ENCODE measurements at regions of chr20 and their contacts with region 1.

Region 1: DNA sequence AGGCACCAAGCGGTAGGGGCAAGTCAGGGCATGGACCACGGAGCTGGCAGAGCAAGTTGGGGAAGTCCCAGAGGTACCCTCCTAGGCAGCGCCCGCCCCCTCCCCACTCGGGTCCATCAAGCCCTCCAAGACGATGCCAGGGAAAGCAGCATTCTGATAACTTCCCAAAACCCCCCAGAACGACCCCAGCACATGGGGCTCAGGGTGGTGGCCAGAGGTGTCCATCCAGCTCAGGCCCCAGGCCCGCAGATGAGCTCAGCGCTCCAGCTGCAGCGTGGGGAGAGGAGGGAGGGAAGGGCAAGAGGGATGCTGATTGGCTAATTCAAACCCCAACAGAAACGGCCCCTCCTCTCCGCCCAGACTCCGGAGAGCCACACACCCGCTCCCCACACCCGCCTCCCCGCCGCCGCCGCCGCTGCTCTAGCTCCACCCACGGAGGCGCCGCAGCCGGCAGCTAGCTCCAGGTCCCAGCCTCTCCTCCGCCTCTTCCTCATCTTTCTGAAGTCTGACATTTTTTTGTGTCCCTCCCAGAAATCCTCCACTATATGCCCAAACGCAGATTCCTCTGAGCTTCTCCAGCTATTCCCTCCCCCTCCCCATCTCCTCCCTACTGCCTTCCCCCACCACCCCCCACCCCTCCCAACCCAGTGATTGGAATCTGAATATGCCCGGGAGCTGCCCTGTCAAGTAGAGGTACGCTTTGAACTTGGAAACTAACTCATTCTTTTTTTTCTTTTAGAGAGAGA is 40.3 kb upstream of the TLDC2 start:
- DNase-seq: peak; percentile 92
- H3K4me3 Mint-ChIP-seq: peak overlapping the region; percentile 77
- H3K27ac Mint-ChIP-seq: peak overlapping the region; percentile 96
- H3K4me1 Mint-ChIP-seq: peaks cover 35% of the 10 kb centered on the region
- H3K27me3 Mint-ChIP-seq: no peaks in the 10 kb centered on the region

Region 2: GRCh38 chr20:36819659-36820058 is 16.0 kb before region 1 on chr20:
- CTCF ChIA-PET with region 1: interaction called, 14 read pairs
- POLR2A ChIA-PET with region 1: no interaction called
- DNase-seq: no peak
- H3K4me3 Mint-ChIP-seq: no peak overlapping the region
- H3K27ac Mint-ChIP-seq: no peak overlapping the region
- H3K4me1 Mint-ChIP-seq: no peaks in the 10 kb centered on the region
- H3K27me3 Mint-ChIP-seq: peaks cover 3% of the 10 kb centered on the region

Region 3: DNA sequence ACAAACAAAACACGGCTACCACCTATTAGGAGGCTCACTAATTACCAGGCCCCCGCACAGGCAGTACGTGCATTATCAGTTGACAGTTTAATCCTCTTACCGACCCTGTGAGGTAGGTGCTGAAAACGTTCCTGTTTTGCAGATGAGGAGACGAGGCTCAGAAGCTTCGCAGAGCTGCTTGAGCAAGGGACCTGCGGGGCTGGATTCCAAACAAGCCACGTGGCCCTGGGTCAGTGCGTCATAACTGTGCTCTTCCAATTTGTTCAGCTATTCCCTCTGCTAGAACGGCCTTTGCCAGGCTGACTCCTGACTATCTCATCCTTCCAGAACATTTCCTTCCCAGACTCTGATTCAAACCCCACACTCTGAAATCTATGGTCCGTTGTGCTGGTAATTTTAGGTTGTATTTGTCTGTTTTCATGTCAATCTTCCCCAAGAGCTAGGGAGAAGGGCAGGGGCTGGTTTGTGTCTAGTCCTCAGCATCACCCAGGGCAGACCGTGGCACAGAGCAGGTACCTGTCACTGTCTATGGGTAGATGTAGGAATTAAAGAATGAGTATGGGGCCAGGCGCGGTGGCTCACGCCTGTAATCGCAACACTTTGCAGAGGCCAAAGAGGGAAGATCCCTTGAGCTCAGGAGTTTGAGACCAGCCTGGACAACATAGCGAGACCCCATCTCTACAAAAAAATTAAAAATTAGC is 11.5 kb after region 1 on chr20:
- CTCF ChIA-PET with region 1: interaction called, 29 read pairs
- POLR2A ChIA-PET with region 1: no interaction called
- DNase-seq: no peak
- H3K4me3 Mint-ChIP-seq: no peak overlapping the region
- H3K27ac Mint-ChIP-seq: no peak overlapping the region
- H3K4me1 Mint-ChIP-seq: peaks cover 15% of the 10 kb centered on the region
- H3K27me3 Mint-ChIP-seq: peaks cover 4% of the 10 kb centered on the region

Region 4: GRCh38 chr20:36856691-36857635 is 21.3 kb after region 1 on chr20:
- CTCF ChIA-PET with region 1: interaction called, 19 read pairs
- POLR2A ChIA-PET with region 1: no interaction called
- DNase-seq: peak; percentile 71
- H3K4me3 Mint-ChIP-seq: no peak overlapping the region
- H3K27ac Mint-ChIP-seq: peak overlapping the region; percentile 54
- H3K4me1 Mint-ChIP-seq: peaks cover 27% of the 10 kb centered on the region
- H3K27me3 Mint-ChIP-seq: peaks cover 17% of the 10 kb centered on the region